ENCODE measurements at regions of chr6 and their contacts with region 1.

Region 1: DNA sequence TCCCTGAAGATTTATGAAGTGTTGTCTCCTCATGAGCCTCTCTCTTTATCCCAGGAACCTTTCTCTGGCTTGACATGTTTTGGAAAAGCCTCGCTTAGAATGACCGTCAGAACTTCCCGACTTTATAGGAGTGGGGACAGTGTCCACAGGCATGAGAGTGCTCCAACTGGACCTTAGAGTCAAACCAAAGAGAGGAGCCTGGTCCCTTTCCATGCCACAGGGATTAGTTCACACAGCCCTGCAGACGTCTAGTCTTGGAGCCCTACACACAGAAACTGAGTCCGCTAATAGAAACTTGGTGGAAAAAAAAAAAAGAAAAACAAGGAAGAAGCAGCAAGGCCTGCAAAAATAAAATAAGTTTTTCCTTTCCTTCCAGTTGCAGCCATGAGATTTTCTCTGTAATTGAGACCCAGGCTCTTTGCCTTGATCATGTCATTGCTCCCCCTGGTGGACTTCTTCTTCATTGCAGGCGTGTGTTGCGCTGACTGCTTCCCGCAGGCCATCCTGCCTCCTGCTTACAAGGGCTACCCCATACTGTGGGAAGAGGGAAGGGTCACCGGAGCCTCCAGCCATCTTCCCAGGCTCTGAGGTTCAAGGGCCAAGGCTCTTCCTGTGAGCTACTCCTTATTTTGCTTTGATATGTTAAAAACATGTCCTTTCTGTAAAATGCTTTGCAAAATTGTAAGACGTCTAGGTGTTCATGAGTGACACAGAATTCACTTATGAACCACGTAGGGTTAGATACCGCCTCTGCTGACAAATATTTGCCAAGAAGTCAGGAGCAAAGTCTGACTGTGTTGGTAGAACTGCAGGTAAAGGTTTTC is 201.0 kb downstream of the UST start:
- DNase-seq: peak; percentile 86
- H3K4me3 Mint-ChIP-seq: no peak overlapping the region
- H3K27ac Mint-ChIP-seq: no peak overlapping the region
- H3K4me1 Mint-ChIP-seq: peaks cover 8% of the 10 kb centered on the region
- H3K27me3 Mint-ChIP-seq: no peaks in the 10 kb centered on the region
- CTCF ChIP-seq: peak; percentile 81

Region 2: DNA sequence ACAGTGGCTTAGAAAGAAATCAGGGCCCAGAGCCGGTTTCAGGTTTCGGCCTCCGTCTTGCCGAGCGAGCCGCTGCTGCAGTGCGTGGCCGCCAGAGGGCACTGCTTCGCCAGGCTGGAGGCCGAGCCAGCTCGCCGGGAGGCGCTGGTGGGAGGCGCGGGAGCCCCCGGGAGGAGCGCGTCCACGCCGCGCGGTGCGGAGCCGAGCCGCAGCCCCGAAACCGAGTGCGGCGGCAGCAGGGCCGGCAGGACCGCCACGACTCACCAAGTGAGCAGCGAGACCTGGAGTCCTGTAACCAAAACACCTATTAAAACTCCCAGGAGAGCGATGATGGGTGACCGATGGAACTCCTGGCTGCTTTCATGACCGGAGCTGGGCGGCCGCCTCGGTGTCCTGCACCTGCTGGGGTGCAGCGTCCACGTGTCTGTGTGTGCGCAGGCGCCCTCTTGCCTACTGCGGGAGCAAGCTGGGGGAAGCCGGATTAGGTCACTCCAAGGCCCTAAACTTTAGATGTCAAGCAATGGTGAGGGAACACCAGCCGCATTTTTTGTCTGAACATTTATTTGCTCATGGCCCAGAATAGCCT is 387.9 kb before region 1 on chr6:
- CTCF ChIA-PET with region 1: interaction called, 6 read pairs
- POLR2A ChIA-PET with region 1: no interaction called
- intact Hi-C with region 1: loop called (anchors 2 kb)
- DNase-seq: peak; percentile 47
- H3K4me3 Mint-ChIP-seq: peak overlapping the region; percentile 50
- H3K27ac Mint-ChIP-seq: no peak overlapping the region
- H3K4me1 Mint-ChIP-seq: no peaks in the 10 kb centered on the region
- H3K27me3 Mint-ChIP-seq: no peaks in the 10 kb centered on the region
- CTCF ChIP-seq: peak; percentile 96

Region 3: DNA sequence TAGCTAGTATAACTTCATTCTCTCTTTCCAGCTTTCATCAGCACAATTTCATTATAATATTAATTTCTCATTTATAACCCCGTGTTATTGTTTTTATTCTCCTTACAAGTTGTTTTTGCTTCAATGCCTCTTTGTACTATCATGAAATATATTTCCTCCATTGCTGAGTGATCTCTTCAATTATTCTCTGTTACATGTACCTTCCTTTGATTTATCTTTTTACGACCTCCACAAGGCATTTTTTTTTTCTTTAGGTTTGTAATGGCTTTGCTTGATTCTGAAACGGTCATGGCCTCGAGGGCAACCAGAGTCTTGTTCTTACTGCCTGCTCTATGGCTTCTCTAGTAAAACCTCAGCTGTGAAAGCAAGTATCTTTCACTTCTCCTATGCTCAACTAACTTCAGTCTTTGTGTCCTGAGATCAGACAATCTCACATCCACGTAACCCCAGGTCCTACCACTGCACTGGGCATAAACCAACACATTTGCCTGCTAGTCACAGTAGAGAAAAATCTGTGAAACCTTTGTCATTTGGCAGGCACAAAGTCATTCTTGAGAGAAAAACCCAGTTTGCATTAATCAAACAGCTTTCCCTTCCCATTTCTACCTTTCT is 81.1 kb before region 1 on chr6:
- CTCF ChIA-PET with region 1: no interaction called
- POLR2A ChIA-PET with region 1: no interaction called
- intact Hi-C with region 1: loop called (anchors 5 kb)
- DNase-seq: no peak
- H3K4me3 Mint-ChIP-seq: no peak overlapping the region
- H3K27ac Mint-ChIP-seq: no peak overlapping the region
- H3K4me1 Mint-ChIP-seq: peaks cover 46% of the 10 kb centered on the region
- H3K27me3 Mint-ChIP-seq: no peaks in the 10 kb centered on the region
- CTCF ChIP-seq: no peak